ENCODE measurements at regions of chr1 and their contacts with region 1.

Region 1: GRCh38 chr1:110787328-110788071 is 85.4 kb upstream of the CD53 start:
- DNase-seq: peak in 28 of 35 experiments; percentile 5 to 73 (median 33)
- ATAC-seq: peak; percentile 80 to 89 (median 86)
- H3K4me3 ChIP-seq: peak overlapping the region; percentile 25 to 30
- H3K4me3 Mint-ChIP-seq: peak overlapping the region; percentile 26 to 66 (median 53)
- H3K27ac ChIP-seq: peak overlapping the region; percentile 57
- H3K27ac Mint-ChIP-seq: peak overlapping the region; percentile 87 to 88
- H3K4me1 ChIP-seq: peaks cover 28 to 53% of the 10 kb centered on the region in 2 experiments
- H3K4me1 Mint-ChIP-seq: peaks cover 61 to 70% (median 67%) of the 10 kb centered on the region in 3 donors
- H3K27me3 ChIP-seq: no peaks in the 10 kb centered on the region
- H3K27me3 Mint-ChIP-seq: no peaks in the 10 kb centered on the region

Region 2: DNA sequence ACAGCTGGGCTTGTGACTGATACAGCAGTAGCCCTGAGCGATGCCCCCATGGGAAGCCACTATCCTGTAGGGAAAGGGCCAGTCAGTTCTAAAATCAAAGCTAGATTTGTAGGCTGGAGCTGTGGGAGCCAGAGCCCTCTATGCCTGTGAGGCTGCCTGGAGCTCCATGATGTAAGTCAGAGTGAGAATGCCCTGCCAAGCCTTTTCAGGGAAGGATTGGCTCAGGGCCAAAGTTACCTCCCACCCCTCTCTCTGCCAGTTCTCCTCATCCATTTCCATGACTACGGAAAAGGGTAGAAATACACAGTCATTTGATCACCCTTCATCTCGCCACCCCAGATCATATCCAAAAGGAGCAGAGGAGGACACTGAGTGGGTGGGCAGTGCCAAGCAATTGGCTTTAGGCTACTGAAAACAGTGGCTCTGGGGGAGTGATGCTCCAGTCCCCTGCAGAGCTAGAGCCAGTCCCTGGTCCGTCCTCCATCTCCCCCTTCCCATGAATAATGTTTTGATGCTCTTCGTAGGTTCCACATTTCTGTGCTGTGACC is 53.3 kb before region 1 on chr1:
- CTCF ChIA-PET with region 1: no interaction called
- POLR2A ChIA-PET with region 1: no interaction called
- DNase-seq: no peak
- ATAC-seq: no peak
- H3K4me3 ChIP-seq: no peak overlapping the region
- H3K4me3 Mint-ChIP-seq: no peak overlapping the region
- H3K27ac ChIP-seq: no peak overlapping the region
- H3K27ac Mint-ChIP-seq: no peak overlapping the region
- H3K4me1 ChIP-seq: no peaks in the 10 kb centered on the region
- H3K4me1 Mint-ChIP-seq: no peaks in the 10 kb centered on the region
- H3K27me3 ChIP-seq: peaks cover 0 to 6% of the 10 kb centered on the region in 2 experiments
- H3K27me3 Mint-ChIP-seq: peaks cover 4 to 9% of the 10 kb centered on the region in 2 donors

Region 3: DNA sequence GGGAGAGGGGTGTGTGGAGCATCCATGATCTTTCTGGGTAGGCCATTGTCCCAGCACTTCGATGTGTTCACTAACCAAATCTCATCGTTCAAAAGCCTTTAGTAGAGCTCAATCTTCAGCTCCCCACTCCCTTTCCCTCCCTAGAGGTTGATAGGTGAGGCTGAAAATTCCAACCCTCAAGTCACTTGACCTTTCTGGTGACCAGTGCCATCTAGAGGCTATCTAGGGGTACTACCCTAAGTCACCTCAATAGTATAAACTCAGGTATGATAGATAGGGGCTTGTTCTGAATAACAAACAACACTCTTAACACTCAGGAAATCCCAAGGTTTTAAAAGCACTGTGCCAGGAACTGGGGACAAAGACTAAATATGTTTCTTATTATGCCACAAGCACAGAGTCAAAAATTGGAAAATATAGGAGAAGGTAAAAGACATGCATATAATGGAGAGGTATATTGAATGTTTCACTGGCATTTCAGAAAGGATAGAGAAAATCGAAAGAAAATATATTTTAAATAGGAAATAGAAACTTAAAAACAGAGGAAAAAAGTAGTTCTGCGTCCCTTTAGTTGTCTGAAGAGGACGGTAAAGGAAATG is 42.6 kb after region 1 on chr1:
- CTCF ChIA-PET with region 1: interaction called, 3 to 14 read pairs
- POLR2A ChIA-PET with region 1: no interaction called
- DNase-seq: peak in 20 of 35 experiments; percentile 3 to 70 (median 11)
- ATAC-seq: peak; percentile 75 to 85 (median 76)
- H3K4me3 ChIP-seq: no peak overlapping the region
- H3K4me3 Mint-ChIP-seq: no peak overlapping the region
- H3K27ac ChIP-seq: no peak overlapping the region
- H3K27ac Mint-ChIP-seq: no peak overlapping the region
- H3K4me1 ChIP-seq: no peaks in the 10 kb centered on the region
- H3K4me1 Mint-ChIP-seq: peaks cover 6 to 10% (median 7%) of the 10 kb centered on the region in 3 donors
- H3K27me3 ChIP-seq: no peaks in the 10 kb centered on the region
- H3K27me3 Mint-ChIP-seq: peaks cover 7 to 9% of the 10 kb centered on the region in 2 donors